Heart right ventricle (tissue), 16 donors: ENCODE measurements at regions of chr5 and their contacts with region 1.

Region 1: DNA sequence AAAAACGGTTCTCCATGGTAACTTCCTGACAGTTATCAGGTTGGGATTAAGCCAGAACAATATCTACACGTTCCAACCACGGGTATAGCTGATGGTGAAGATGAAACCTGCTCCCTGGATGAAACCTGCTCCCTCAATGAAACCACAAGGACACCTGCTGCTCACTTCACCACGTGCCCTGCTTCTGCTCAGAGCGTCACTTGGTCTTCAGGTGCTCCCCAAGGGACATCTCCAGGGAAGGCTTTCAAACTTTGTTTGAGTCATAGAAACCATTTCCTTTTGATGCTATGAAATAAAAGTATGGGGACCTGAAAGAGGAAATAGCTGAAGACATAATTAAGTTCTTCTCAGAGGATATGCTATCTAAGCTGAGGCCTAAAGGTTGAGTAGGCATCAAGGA is 242.4 kb downstream of the MED10 start:
- DNase-seq: no peak
- ATAC-seq: no peak
- H3K4me3 ChIP-seq: no peak overlapping the region
- H3K27ac ChIP-seq: no peak overlapping the region
- H3K4me1 ChIP-seq: no peaks in the 10 kb centered on the region
- H3K27me3 ChIP-seq: no peaks in the 10 kb centered on the region
- CTCF ChIP-seq: no peak

Region 2: GRCh38 chr5:5810461-5810860 is 325.5 kb before region 1 on chr5:
- intact Hi-C with region 1: no loop called
- DNase-seq: peak; percentile 25 to 31
- ATAC-seq: peak in 5 of 8 donors; percentile 54 to 95 (median 90)
- H3K4me3 ChIP-seq: no peak overlapping the region
- H3K27ac ChIP-seq: no peak overlapping the region
- H3K4me1 ChIP-seq: no peaks in the 10 kb centered on the region
- H3K27me3 ChIP-seq: no peaks in the 10 kb centered on the region
- CTCF ChIP-seq: no peak

Region 3: GRCh38 chr5:6115852-6116251 is 20.1 kb before region 1 on chr5:
- intact Hi-C with region 1: loop called in 1 of 10 experiments (anchors 1 kb)
- DNase-seq: no peak
- ATAC-seq: no peak
- H3K4me3 ChIP-seq: no peak overlapping the region
- H3K27ac ChIP-seq: no peak overlapping the region
- H3K4me1 ChIP-seq: no peaks in the 10 kb centered on the region
- H3K27me3 ChIP-seq: peaks cover 0 to 3% (median 0%) of the 10 kb centered on the region in 7 donors
- CTCF ChIP-seq: no peak